ENCODE measurements at regions of chr2 and their contacts with region 1.

Region 1: DNA sequence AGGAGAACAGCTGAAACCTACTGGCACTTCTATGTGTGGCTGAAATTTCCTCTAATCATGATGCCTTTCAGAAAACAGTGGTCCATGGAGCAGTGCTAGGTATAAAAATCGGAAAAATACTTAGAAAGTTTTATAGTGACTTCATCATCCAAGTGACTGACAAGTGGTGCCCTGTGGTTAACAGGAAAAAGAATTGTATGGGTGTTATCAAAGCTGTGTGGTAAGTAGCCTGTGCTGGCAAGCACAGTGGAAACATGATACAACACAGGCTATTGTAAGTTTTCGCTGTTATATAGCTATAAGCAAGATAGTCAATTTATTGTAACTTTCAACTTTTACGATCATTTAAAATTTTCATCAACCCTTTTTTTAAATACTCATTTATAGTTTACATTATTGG is 1599.7 kb upstream of the ZEB2 start:
- DNase-seq: peak; percentile 59
- H3K4me3 ChIP-seq: no peak overlapping the region
- H3K27ac ChIP-seq: no peak overlapping the region
- H3K4me1 ChIP-seq: peaks cover 4% of the 10 kb centered on the region
- H3K27me3 ChIP-seq: no peaks in the 10 kb centered on the region
- CTCF ChIP-seq: no peak

Region 2: GRCh38 chr2:145939949-145940348 is 179.6 kb before region 1 on chr2:
- CTCF ChIA-PET with region 1: no interaction called
- POLR2A ChIA-PET with region 1: no interaction called
- intact Hi-C with region 1: no loop called
- DNase-seq: no peak
- H3K4me3 ChIP-seq: no peak overlapping the region
- H3K27ac ChIP-seq: no peak overlapping the region
- H3K4me1 ChIP-seq: peaks cover under 1% of the 10 kb centered on the region
- H3K27me3 ChIP-seq: no peaks in the 10 kb centered on the region
- CTCF ChIP-seq: no peak

Region 3: DNA sequence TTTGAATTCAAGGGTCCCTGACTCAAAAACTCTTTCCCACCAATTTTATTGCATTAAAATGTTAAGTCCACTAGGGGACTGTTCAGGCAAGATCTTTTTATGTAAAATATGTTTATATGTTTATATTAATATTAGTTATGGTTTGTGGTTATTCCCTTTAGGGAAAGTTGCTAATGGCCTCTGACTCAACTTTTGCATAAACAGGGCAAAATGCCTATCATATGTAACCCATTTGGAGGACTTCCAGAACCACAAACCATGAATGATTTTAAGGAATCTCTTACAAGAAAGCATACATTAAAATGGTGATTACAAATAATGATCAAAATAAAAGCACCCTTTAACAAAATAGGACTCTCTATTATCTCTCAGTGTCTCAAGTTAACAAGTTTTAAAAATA is 115.1 kb before region 1 on chr2:
- CTCF ChIA-PET with region 1: no interaction called
- POLR2A ChIA-PET with region 1: no interaction called
- intact Hi-C with region 1: no loop called
- DNase-seq: peak; percentile 60
- H3K4me3 ChIP-seq: no peak overlapping the region
- H3K27ac ChIP-seq: no peak overlapping the region
- H3K4me1 ChIP-seq: no peaks in the 10 kb centered on the region
- H3K27me3 ChIP-seq: no peaks in the 10 kb centered on the region
- CTCF ChIP-seq: no peak

Region 4: DNA sequence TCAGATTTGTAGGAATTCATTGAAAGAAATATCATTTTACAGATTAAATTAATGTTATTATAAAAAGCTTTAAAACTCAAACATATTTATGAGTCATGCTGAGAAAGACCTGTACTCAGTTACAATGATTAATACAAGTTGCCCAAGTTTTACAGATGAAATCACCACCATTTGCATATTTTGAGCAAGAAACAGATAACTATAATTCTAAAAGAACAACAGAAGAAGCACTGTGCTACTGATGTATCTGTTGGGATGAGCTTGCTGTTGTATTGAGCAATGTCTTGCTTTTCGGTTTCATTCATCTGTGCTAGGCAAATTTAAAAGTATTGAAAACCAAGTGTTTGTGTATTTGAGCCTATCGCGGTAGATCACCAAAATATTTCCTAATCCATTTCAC is 10.6 kb before region 1 on chr2:
- CTCF ChIA-PET with region 1: no interaction called
- POLR2A ChIA-PET with region 1: no interaction called
- intact Hi-C with region 1: loop called (anchors 1 kb)
- DNase-seq: no peak
- H3K4me3 ChIP-seq: no peak overlapping the region
- H3K27ac ChIP-seq: no peak overlapping the region
- H3K4me1 ChIP-seq: no peaks in the 10 kb centered on the region
- H3K27me3 ChIP-seq: no peaks in the 10 kb centered on the region
- CTCF ChIP-seq: no peak

Measured in A673 (cell line).